CD8-positive, alpha-beta memory T cell (primary cell): ENCODE measurements at regions of chr4 and their contacts with region 1.

Region 1: DNA sequence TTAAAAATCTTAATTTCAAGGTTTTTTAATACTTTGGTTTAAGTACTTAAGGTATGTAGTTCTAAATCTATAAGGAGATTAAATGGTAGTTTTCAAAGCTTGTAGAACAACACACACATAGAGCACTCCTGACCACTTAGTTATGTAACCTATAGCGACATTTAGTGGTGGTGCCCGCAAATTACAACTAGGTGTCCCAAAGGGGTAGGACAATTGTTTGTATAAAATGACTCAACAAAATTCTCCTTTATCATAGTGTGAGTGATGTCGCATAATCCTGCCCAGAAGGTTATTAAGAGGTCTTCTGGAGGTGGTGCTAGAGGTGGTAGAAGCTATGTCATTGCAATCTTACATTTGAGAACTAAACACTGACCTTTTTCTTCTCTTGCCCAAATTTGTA is 373.0 kb upstream of the RASGEF1B start:
- DNase-seq: peak; percentile 35 to 78 (median 58)
- H3K4me3 ChIP-seq: no peak overlapping the region
- H3K4me3 Mint-ChIP-seq: no peak overlapping the region
- H3K27ac ChIP-seq: no peak overlapping the region
- H3K27ac Mint-ChIP-seq: no peak overlapping the region
- H3K4me1 ChIP-seq: no peaks in the 10 kb centered on the region
- H3K4me1 Mint-ChIP-seq: no peaks in the 10 kb centered on the region
- H3K27me3 ChIP-seq: no peaks in the 10 kb centered on the region
- H3K27me3 Mint-ChIP-seq: peaks cover 0 to 3% of the 10 kb centered on the region in 2 donors

Region 2: DNA sequence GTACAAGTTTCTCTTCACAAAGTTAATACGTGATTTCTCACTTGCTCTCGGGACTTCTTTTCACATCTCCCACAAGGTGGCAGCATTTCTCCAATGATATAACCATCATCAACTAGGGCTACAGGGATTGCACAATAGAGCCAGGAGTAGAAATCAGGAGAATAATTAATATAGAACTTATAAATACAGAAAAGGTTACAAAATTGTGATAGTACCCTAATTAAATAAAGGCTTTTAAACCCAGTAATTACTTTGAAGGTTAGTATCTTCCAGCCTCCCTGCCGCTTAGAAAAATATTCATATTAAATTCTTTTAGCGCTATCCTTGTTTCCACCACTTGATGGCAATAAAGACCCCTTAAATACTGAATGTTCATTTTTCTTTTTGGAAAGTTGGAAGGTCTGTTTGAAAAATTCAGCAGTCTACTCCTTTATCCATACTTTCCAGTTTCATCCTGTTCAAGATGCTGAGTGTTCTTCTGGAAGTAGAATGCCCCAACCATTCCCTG is 438.8 kb before region 1 on chr4:
- CTCF ChIA-PET with region 1: interaction called, 12 read pairs
- POLR2A ChIA-PET with region 1: no interaction called
- DNase-seq: peak in 3 of 5 donors; percentile 6 to 70 (median 63)
- H3K4me3 ChIP-seq: peak overlapping the region; percentile 11
- H3K4me3 Mint-ChIP-seq: peak overlapping the region in 4 of 7 donors; percentile 17 to 39 (median 27)
- H3K27ac ChIP-seq: no peak overlapping the region
- H3K27ac Mint-ChIP-seq: no peak overlapping the region
- H3K4me1 ChIP-seq: peaks cover 7% of the 10 kb centered on the region
- H3K4me1 Mint-ChIP-seq: peaks cover 5 to 8% (median 5%) of the 10 kb centered on the region in 3 donors
- H3K27me3 ChIP-seq: peaks cover 5% of the 10 kb centered on the region
- H3K27me3 Mint-ChIP-seq: peaks cover 6 to 7% of the 10 kb centered on the region in 2 donors

Region 3: GRCh38 chr4:81512757-81513501 is 331.8 kb before region 1 on chr4:
- CTCF ChIA-PET with region 1: no interaction called
- POLR2A ChIA-PET with region 1: no interaction called
- DNase-seq: no peak
- H3K4me3 ChIP-seq: no peak overlapping the region
- H3K4me3 Mint-ChIP-seq: no peak overlapping the region
- H3K27ac ChIP-seq: no peak overlapping the region
- H3K27ac Mint-ChIP-seq: peak overlapping the region in 1 of 8 donors; percentile 14
- H3K4me1 ChIP-seq: no peaks in the 10 kb centered on the region
- H3K4me1 Mint-ChIP-seq: peaks cover 1 to 11% (median 5%) of the 10 kb centered on the region in 3 donors
- H3K27me3 ChIP-seq: no peaks in the 10 kb centered on the region
- H3K27me3 Mint-ChIP-seq: peaks cover 0 to 3% of the 10 kb centered on the region in 2 donors